Body of pancreas (tissue), 4 donors: ENCODE measurements at regions of chr4 and their contacts with region 1.

Region 1: DNA sequence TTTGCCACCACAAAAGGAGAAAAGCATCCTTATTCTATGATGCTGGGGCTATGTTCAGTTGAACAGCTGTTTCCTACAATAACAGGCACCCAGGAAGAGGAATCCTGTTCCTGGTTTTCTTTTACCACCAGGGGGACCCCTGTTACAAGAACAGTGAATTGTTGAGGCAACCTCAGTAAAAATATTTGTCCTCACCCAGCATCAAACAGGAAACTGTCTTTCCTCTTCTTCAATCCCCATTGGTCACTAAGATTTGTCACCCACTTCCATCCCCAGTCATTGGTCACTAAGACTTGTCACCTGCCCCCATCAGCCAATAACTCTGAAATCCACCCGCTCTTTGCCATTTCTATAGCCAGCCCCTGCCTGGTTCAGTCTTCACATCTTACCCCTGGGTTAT is 143.5 kb upstream of the GALNT7 start:
- DNase-seq: peak; percentile 68 to 84 (median 71)
- ATAC-seq: peak; percentile 92
- H3K4me3 ChIP-seq: no peak overlapping the region
- H3K27ac ChIP-seq: no peak overlapping the region
- H3K4me1 ChIP-seq: no peaks in the 10 kb centered on the region
- H3K27me3 ChIP-seq: no peaks in the 10 kb centered on the region
- CTCF ChIP-seq: peak; percentile 56 to 94 (median 84)
- POLR2A ChIP-seq: no peak

Region 2: DNA sequence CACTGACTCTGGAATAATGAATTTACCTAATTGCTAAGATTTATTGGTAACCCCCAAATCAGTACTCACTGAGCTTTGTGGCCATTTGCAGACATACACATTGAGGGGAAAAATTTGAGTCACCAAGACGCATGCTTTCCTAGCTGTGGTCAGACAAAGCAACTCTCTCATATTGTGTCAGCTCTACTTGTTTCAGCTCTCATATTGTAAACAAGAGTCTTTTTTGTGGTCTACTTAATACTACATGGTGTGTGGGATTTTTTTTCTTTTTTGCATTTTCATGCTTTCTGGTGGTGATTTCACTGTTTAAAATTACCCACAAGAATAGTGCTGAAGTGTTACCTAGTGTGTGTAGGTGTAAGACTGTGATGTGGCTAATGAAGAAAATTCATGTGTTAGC is 284.7 kb before region 1 on chr4:
- intact Hi-C with region 1: no loop called
- DNase-seq: no peak
- ATAC-seq: no peak
- H3K4me3 ChIP-seq: no peak overlapping the region
- H3K27ac ChIP-seq: no peak overlapping the region
- H3K4me1 ChIP-seq: no peaks in the 10 kb centered on the region
- H3K27me3 ChIP-seq: no peaks in the 10 kb centered on the region
- CTCF ChIP-seq: no peak
- POLR2A ChIP-seq: no peak

Region 3: GRCh38 chr4:173169428-173170181 is 144.5 kb after region 1 on chr4:
- intact Hi-C with region 1: loop called (anchors 10 kb)
- DNase-seq: peak; percentile 43 to 60 (median 52)
- ATAC-seq: peak; percentile 49
- H3K4me3 ChIP-seq: peak overlapping the region; percentile 59 to 74
- H3K27ac ChIP-seq: peak overlapping the region; percentile 91 to 97 (median 93)
- H3K4me1 ChIP-seq: peaks cover 35% of the 10 kb centered on the region
- H3K27me3 ChIP-seq: no peaks in the 10 kb centered on the region
- CTCF ChIP-seq: no peak
- POLR2A ChIP-seq: peak; percentile 17 to 30 (median 18)

Region 4: DNA sequence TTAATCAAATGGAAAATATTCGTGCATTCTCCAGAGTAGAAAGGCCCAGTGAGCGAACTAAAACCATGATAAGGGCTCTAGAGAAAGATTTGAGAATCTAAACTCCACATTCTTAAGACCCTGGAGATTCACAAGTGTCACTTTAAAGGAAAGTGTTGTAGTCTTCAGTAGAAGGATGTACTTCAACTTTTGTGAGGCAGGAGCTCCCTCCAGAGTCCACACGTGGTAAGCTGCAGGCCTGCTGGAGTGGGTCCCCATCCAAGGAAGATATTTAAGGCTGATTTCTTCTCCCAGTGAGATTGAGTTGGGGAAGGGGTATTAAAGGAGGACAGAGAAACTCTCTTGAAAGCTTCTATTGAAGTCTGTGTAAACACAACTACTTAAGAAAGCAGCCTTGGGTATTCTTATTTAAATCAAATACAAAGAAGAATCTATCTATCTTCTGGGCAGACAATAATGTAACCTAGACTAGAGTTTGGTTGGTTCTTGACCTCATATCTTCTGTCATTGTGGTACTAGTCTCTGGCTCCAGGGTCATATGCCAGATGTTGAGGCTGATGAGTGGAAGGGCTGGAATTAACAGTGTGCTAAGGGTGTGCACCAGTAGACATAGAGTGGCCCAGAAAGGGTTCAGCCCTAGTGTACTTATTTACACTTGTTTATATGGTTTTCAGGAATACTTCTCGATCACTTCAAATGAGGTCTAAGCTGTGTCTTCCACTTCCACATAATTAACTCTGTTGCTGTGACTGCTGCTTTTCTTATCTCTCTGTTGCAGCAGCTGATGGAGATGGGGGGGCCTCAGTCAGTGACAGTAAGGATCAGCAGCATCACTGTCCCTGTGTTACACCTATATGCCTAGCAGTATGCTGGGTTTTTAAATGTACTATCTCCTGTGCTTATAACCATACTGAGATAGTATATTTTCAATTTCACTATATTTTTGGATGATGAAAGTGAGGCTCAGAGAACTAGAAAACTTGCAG is 232.9 kb after region 1 on chr4:
- intact Hi-C with region 1: loop called (anchors 5 kb)
- DNase-seq: peak; percentile 56 to 65 (median 62)
- ATAC-seq: peak; percentile 78
- H3K4me3 ChIP-seq: no peak overlapping the region
- H3K27ac ChIP-seq: no peak overlapping the region
- H3K4me1 ChIP-seq: peaks cover 2% of the 10 kb centered on the region
- H3K27me3 ChIP-seq: no peaks in the 10 kb centered on the region
- CTCF ChIP-seq: peak; percentile 17 to 78 (median 72)
- POLR2A ChIP-seq: no peak

Region 5: GRCh38 chr4:173264684-173265185 is 239.6 kb after region 1 on chr4:
- intact Hi-C with region 1: loop called (anchors 5 kb)
- DNase-seq: peak; percentile 58 to 78 (median 65)
- ATAC-seq: peak; percentile 71
- H3K4me3 ChIP-seq: no peak overlapping the region
- H3K27ac ChIP-seq: peak overlapping the region in 3 of 4 donors; percentile 25 to 57 (median 27)
- H3K4me1 ChIP-seq: peaks cover 10% of the 10 kb centered on the region
- H3K27me3 ChIP-seq: no peaks in the 10 kb centered on the region
- CTCF ChIP-seq: no peak
- POLR2A ChIP-seq: no peak